ENCODE measurements at regions of chr20 and their contacts with region 1.

Region 1: DNA sequence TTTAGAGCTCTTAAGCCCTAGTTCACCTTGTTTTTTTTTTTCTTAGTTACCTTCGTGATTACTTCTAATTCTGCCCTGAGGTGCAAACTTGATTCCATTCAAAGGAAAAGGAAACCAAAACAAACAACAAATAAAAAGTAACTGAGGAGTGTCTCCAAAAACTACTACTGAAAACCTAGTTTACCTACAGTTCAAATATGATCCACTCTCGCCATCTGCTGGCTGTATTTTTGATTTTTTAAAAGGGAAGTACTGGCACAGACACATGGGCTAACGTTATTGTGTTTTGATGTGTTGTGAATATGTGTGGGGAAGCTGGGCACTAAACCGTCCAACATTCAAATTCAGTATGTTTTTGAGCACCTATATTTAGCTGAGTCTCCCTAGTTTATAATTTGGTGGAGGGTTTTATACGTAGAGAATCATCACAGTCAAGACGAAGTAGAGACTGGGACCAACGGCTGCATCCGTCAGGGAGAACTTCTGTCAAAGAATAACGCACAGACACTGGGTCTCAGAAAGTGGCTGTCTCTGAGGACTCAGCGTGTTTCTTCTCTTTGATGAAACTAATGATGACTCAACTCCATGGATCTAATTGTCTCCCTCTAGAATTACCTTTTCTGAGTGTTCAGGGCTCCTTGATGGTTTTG is 373.5 kb upstream of the BTBD3 start:
- DNase-seq: peak; percentile 32
- H3K4me3 Mint-ChIP-seq: no peak overlapping the region
- H3K27ac Mint-ChIP-seq: no peak overlapping the region
- H3K4me1 Mint-ChIP-seq: peaks cover 6% of the 10 kb centered on the region
- H3K27me3 Mint-ChIP-seq: no peaks in the 10 kb centered on the region
- CTCF ChIP-seq: no peak

Region 2: GRCh38 chr20:9616833-9617489 is 1927.2 kb before region 1 on chr20:
- CTCF ChIA-PET with region 1: no interaction called
- intact Hi-C with region 1: loop called (anchors 5 kb)
- DNase-seq: peak; percentile 46
- H3K4me3 Mint-ChIP-seq: no peak overlapping the region
- H3K27ac Mint-ChIP-seq: no peak overlapping the region
- H3K4me1 Mint-ChIP-seq: no peaks in the 10 kb centered on the region
- H3K27me3 Mint-ChIP-seq: no peaks in the 10 kb centered on the region
- CTCF ChIP-seq: peak; percentile 48

Region 3: DNA sequence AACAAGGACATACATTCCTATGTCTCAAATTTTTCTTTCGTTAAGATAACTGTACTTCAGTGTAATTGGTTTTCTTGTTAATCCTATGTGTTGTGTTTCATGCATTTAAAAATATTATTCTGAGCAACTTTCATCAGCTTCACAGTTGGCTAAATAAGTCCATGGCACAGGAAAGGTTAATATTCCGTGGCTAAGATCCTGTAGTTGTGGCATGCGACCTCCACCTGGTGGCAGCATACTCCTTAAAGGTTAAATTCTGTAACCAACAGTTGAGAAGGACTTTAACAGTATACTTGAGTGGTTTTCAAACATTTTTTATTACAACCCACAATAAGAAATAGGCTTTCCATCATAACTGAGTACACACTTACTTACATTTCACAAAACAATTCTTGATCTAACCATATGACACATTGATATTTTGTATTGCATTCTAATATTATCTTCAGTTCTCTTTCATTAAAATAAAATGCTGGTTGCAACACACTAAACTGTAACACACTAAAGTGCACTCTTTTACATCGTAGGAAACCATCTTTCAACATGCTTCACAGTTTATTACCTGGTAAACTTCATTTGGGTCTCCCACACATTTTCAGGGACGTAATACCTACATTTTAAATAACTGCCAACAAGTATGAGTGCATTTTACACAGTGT is 990.7 kb before region 1 on chr20:
- CTCF ChIA-PET with region 1: no interaction called
- intact Hi-C with region 1: loop called (anchors 1 kb)
- DNase-seq: peak; percentile 63
- H3K4me3 Mint-ChIP-seq: no peak overlapping the region
- H3K27ac Mint-ChIP-seq: no peak overlapping the region
- H3K4me1 Mint-ChIP-seq: peaks cover 46% of the 10 kb centered on the region
- H3K27me3 Mint-ChIP-seq: no peaks in the 10 kb centered on the region
- CTCF ChIP-seq: peak; percentile 40

Region 4: GRCh38 chr20:11274141-11274594 is 270.0 kb before region 1 on chr20:
- CTCF ChIA-PET with region 1: interaction called, 3 read pairs
- intact Hi-C with region 1: loop called (anchors 5 kb)
- DNase-seq: peak; percentile 38
- H3K4me3 Mint-ChIP-seq: no peak overlapping the region
- H3K27ac Mint-ChIP-seq: no peak overlapping the region
- H3K4me1 Mint-ChIP-seq: peaks cover 19% of the 10 kb centered on the region
- H3K27me3 Mint-ChIP-seq: no peaks in the 10 kb centered on the region
- CTCF ChIP-seq: no peak

Region 5: DNA sequence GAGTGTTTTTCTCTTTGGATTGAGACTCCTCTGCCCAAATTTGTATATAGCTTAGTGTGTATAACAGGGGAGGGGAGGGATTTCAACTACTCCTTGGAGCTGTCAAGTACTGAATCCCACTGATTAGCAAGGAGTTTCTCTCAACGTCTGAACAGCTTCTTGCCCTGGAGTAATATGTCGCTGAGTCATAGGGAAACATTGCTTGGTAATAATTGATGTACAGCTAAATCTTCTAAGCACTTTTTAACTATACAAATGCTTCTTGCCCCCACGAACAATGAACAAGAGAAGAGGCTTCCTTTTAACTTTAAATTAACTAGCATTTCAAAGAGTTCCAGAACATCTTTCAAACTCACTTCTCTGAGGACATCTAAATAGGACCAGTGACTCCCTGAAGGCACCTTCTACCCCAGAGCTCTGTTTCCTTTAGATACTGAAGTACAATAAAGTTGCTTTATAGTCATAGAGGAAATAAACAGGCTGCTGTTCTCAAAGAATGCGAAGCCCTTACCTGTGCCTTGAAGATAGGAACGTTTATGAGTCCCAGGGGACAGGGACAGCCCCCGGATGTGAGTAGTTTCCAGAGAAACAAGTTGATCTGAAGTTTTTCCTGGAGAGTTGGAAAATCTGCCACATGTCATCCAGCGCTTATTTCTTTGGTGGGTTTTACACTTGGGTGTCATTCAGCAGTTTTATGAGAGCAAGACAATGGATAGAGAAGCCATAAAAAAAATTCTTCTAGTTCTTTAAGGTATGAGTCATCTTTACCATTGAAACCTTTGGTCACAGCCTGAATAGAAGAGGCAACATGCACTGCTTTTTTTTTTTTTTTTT is 89.0 kb before region 1 on chr20:
- CTCF ChIA-PET with region 1: no interaction called
- intact Hi-C with region 1: loop called (anchors 5 kb)
- DNase-seq: peak; percentile 19
- H3K4me3 Mint-ChIP-seq: peak overlapping the region; percentile 29
- H3K27ac Mint-ChIP-seq: peak overlapping the region; percentile 90
- H3K4me1 Mint-ChIP-seq: peaks cover 43% of the 10 kb centered on the region
- H3K27me3 Mint-ChIP-seq: no peaks in the 10 kb centered on the region
- CTCF ChIP-seq: no peak

Region 6: GRCh38 chr20:11581271-11581670 is 37.1 kb after region 1 on chr20:
- CTCF ChIA-PET with region 1: no interaction called
- intact Hi-C with region 1: no loop called
- DNase-seq: no peak
- H3K4me3 Mint-ChIP-seq: no peak overlapping the region
- H3K27ac Mint-ChIP-seq: no peak overlapping the region
- H3K4me1 Mint-ChIP-seq: no peaks in the 10 kb centered on the region
- H3K27me3 Mint-ChIP-seq: no peaks in the 10 kb centered on the region
- CTCF ChIP-seq: no peak